Activated CD4-positive, alpha-beta T cell treated with anti-CD3 and anti-CD28 coated beads for 36 hours (primary cell): ENCODE measurements at regions of chr2 and their contacts with region 1.

Region 1: GRCh38 chr2:46262248-46262938 is 34.8 kb upstream of the EPAS1 start:
- DNase-seq: no peak
- ATAC-seq: no peak
- H3K4me3 Mint-ChIP-seq: no peak overlapping the region
- H3K27ac Mint-ChIP-seq: no peak overlapping the region
- H3K4me1 Mint-ChIP-seq: no peaks in the 10 kb centered on the region
- H3K27me3 Mint-ChIP-seq: peaks cover 3% of the 10 kb centered on the region

Region 2: DNA sequence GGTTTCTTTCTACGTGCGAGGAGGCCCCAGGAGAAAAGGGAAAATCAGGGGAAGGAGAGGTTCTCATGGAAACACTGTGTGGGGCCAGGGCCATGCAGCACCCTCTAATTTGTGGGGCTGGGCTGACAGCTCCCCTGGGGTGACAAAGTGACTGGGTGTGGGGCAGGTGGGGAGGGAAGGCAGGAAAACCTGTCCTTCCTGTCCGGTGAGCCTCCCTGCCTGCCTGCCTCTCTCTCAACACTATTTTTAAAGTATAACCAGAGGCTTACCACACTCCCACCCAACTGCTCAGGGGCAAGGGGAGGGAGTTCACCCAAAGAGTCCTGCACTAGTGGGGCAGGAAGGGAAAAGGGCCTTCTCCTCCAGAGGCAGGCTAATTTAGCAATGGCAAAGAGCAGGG is 24.3 kb after region 1 on chr2:
- CTCF ChIA-PET with region 1: interaction called, 3 read pairs
- POLR2A ChIA-PET with region 1: no interaction called
- intact Hi-C with region 1: loop called in 1 of 2 experiments (anchors 1 kb)
- DNase-seq: no peak
- ATAC-seq: no peak
- H3K4me3 Mint-ChIP-seq: no peak overlapping the region
- H3K27ac Mint-ChIP-seq: no peak overlapping the region
- H3K4me1 Mint-ChIP-seq: no peaks in the 10 kb centered on the region
- H3K27me3 Mint-ChIP-seq: no peaks in the 10 kb centered on the region